ENCODE measurements at regions of chr17 and their contacts with region 1.

Region 1: GRCh38 chr17:38994026-38994425 is 26.8 kb upstream of the FBXO47 start:
- DNase-seq: no peak
- ATAC-seq: peak in 1 of 4 donors; percentile 69
- H3K4me3 ChIP-seq: no peak overlapping the region
- H3K27ac ChIP-seq: peak overlapping the region in 4 of 12 donors; percentile 11 to 63 (median 54)
- H3K4me1 ChIP-seq: peaks cover 0 to 11% (median 0%) of the 10 kb centered on the region in 12 donors
- H3K27me3 ChIP-seq: no peaks in the 10 kb centered on the region
- CTCF ChIP-seq: no peak
- POLR2A ChIP-seq: no peak

Region 2: GRCh38 chr17:39069114-39069756 is 75.2 kb after region 1 on chr17:
- intact Hi-C with region 1: loop called in 3 of 10 experiments (anchors 5 to 10 kb)
- DNase-seq: no peak
- ATAC-seq: peak; percentile 36 to 65 (median 62)
- H3K4me3 ChIP-seq: no peak overlapping the region
- H3K27ac ChIP-seq: no peak overlapping the region
- H3K4me1 ChIP-seq: peaks cover 0 to 7% (median 0%) of the 10 kb centered on the region in 12 donors
- H3K27me3 ChIP-seq: no peaks in the 10 kb centered on the region
- CTCF ChIP-seq: peak; percentile 44 to 68 (median 54)
- POLR2A ChIP-seq: no peak